ENCODE measurements at regions of chr13 and their contacts with region 1.

Region 1: DNA sequence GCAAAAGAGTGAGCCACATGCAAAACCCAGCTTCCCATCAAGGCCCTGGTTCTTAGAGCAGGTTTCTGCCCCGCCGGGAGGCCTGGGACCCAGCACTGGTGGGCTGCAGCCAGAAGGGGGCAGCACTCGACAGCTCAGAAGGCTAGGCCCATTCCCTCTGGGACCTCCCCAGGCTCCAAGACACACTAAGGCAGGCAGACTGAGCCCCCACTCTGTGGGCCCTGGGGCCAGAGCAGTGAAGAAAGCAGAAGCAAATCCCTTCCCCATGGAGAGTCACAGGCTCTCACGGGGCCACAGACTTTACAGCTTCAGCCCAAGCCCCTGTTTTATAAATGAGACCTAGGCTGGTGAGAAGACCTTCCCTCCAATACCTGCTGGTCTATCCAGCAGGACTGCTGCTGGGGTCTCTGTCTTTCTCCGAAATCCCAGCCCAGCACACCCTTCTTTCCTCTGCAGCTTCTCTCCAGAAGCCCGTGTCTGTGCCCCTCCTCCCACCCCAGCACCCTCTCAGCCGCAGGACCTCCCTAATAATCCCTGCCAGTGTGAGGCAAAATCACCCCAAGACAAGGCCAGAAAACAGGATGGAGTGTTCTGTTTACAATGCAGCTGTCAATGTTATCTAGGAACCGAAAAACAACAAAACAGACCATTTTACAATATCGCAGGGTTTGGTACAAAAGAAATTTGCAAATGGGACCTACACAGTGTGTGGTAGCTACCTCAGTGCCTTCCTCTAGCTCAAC is 109.3 kb downstream of the ABCC4 start:
- DNase-seq: peak; percentile 81 to 90
- H3K4me3 ChIP-seq: no peak overlapping the region
- H3K4me3 Mint-ChIP-seq: no peak overlapping the region
- H3K27ac Mint-ChIP-seq: no peak overlapping the region
- H3K4me1 ChIP-seq: no peaks in the 10 kb centered on the region
- H3K4me1 Mint-ChIP-seq: no peaks in the 10 kb centered on the region
- H3K27me3 ChIP-seq: no peaks in the 10 kb centered on the region
- H3K27me3 Mint-ChIP-seq: no peaks in the 10 kb centered on the region
- CTCF ChIP-seq: peak; percentile 96 to 99

Region 2: GRCh38 chr13:94967183-94968039 is 224.6 kb before region 1 on chr13:
- CTCF ChIA-PET with region 1: no interaction called
- POLR2A ChIA-PET with region 1: no interaction called
- intact Hi-C with region 1: no loop called
- DNase-seq: no peak
- H3K4me3 ChIP-seq: no peak overlapping the region
- H3K4me3 Mint-ChIP-seq: no peak overlapping the region
- H3K27ac Mint-ChIP-seq: no peak overlapping the region
- H3K4me1 ChIP-seq: no peaks in the 10 kb centered on the region
- H3K4me1 Mint-ChIP-seq: no peaks in the 10 kb centered on the region
- H3K27me3 ChIP-seq: no peaks in the 10 kb centered on the region; the same call in none of the 2 replicates
- H3K27me3 Mint-ChIP-seq: peaks cover 35% of the 10 kb centered on the region
- CTCF ChIP-seq: no peak

Region 3: GRCh38 chr13:95146486-95146885 is 45.5 kb before region 1 on chr13:
- CTCF ChIA-PET with region 1: no interaction called
- POLR2A ChIA-PET with region 1: no interaction called
- intact Hi-C with region 1: no loop called
- DNase-seq: no peak
- H3K4me3 ChIP-seq: no peak overlapping the region
- H3K4me3 Mint-ChIP-seq: no peak overlapping the region
- H3K27ac Mint-ChIP-seq: no peak overlapping the region
- H3K4me1 ChIP-seq: no peaks in the 10 kb centered on the region
- H3K4me1 Mint-ChIP-seq: peaks cover 14% of the 10 kb centered on the region
- H3K27me3 ChIP-seq: no peaks in the 10 kb centered on the region
- H3K27me3 Mint-ChIP-seq: no peaks in the 10 kb centered on the region
- CTCF ChIP-seq: no peak

Region 4: DNA sequence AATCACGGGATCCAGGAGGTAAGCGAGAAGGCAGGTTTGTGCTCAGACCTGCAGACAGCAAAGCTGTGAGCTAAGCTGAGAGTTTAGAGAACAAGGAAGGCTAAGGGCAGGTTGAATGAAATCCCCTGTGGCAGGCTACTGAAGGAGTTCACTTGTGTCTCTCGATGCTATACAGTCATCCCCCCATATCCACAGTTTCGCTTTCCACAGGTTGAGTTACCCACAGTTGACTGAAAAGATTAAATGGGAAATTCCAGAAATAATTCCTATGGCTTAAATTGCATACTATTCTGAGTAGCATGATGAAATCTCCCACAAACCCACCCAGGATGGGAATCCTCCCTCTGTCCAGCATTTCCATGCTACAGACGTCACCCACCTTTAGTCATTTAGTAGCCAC is 59.6 kb after region 1 on chr13:
- CTCF ChIA-PET with region 1: no interaction called
- POLR2A ChIA-PET with region 1: no interaction called
- intact Hi-C with region 1: loop called (anchors 5 kb)
- DNase-seq: no peak
- H3K4me3 ChIP-seq: no peak overlapping the region
- H3K4me3 Mint-ChIP-seq: no peak overlapping the region
- H3K27ac Mint-ChIP-seq: no peak overlapping the region
- H3K4me1 ChIP-seq: peaks cover 43% of the 10 kb centered on the region
- H3K4me1 Mint-ChIP-seq: peaks cover 29% of the 10 kb centered on the region
- H3K27me3 ChIP-seq: no peaks in the 10 kb centered on the region; the same call in 1 of the 2 replicates
- H3K27me3 Mint-ChIP-seq: no peaks in the 10 kb centered on the region
- CTCF ChIP-seq: no peak

Region 5: DNA sequence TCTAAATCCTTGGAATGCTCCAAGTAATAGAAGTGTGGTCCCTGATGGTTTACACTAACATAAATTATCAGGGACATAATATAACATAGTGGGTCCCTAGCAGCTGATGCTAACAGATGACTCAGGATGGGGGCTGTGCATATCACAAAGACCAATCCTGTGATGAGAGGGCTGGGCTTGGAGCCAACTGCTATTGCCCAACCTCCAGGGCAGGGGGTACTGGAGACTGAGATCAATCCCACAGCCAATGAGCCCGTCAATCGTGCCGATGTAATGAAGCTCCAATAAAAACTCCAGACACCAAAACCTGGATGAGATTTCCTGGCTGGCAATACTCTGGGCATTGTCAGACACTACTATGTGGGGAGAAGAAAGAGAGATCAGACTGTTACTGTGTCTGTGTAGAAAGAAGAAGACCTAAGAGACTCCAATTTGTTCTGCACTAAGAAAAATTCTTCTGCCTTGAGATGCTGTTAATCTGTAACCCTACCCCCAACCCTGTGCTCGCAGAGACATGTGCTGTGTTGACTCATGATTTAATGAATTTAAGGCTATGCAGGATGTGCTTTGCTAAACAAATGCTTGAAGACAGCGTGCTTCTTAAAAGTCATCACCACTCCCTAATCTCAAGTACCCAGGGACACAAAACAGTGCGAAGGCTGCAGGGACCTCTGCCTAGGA is 75.8 kb after region 1 on chr13:
- CTCF ChIA-PET with region 1: no interaction called
- POLR2A ChIA-PET with region 1: no interaction called
- intact Hi-C with region 1: loop called (anchors 5 kb)
- DNase-seq: peak; percentile 49 to 53
- H3K4me3 ChIP-seq: no peak overlapping the region
- H3K4me3 Mint-ChIP-seq: peak overlapping the region; percentile 51
- H3K27ac Mint-ChIP-seq: peak overlapping the region; percentile 69
- H3K4me1 ChIP-seq: peaks cover 42% of the 10 kb centered on the region
- H3K4me1 Mint-ChIP-seq: peaks cover 38% of the 10 kb centered on the region
- H3K27me3 ChIP-seq: no peaks in the 10 kb centered on the region
- H3K27me3 Mint-ChIP-seq: no peaks in the 10 kb centered on the region
- CTCF ChIP-seq: no peak

Region 6: GRCh38 chr13:95301183-95301967 is 109.4 kb after region 1 on chr13 and contains the start of gene ABCC4:
- CTCF ChIA-PET with region 1: interaction called, 15 read pairs
- POLR2A ChIA-PET with region 1: no interaction called
- intact Hi-C with region 1: loop called (anchors 1 kb)
- DNase-seq: peak; percentile 84 to 91
- H3K4me3 ChIP-seq: peak within 1 kb of the TSS; percentile 91
- H3K4me3 Mint-ChIP-seq: peak within 1 kb of the TSS; percentile 99
- H3K27ac Mint-ChIP-seq: peak within 1 kb of the TSS; percentile 88
- H3K4me1 ChIP-seq: peaks cover 46% of the 10 kb centered on the region
- H3K4me1 Mint-ChIP-seq: peaks cover 32% of the 10 kb centered on the region
- H3K27me3 ChIP-seq: no peaks in the 10 kb centered on the region
- H3K27me3 Mint-ChIP-seq: no peaks in the 10 kb centered on the region
- CTCF ChIP-seq: peak in 1 of 2 experiments; percentile 24
- total RNA-seq, gene ABCC4: 51.9 and 65.7 TPM in 2 replicates

Region 7: DNA sequence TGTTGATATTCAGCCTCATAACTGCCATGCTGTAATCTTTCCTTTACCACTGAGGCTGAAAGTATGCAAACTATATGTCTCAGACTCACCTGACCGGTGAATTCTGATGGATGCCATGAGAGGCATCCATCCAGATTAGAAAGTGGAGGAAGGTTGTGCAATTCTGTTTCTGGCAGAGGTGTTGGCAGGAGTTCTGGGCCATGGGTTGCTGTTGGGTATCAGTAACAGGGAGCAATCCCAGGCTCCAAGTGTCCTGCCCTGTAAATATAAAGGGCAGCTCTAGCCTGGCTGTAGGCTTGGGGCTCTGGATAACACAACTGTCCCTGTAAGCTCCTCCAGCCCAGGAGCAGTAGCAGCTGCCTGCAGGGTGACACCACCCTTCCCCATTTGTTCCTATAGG is 186.6 kb after region 1 on chr13:
- CTCF ChIA-PET with region 1: interaction called, 37 read pairs
- POLR2A ChIA-PET with region 1: no interaction called
- intact Hi-C with region 1: loop called (anchors 1 kb)
- DNase-seq: no peak
- H3K4me3 ChIP-seq: no peak overlapping the region
- H3K4me3 Mint-ChIP-seq: no peak overlapping the region
- H3K27ac Mint-ChIP-seq: no peak overlapping the region
- H3K4me1 ChIP-seq: no peaks in the 10 kb centered on the region
- H3K4me1 Mint-ChIP-seq: peaks cover 11% of the 10 kb centered on the region
- H3K27me3 ChIP-seq: no peaks in the 10 kb centered on the region
- H3K27me3 Mint-ChIP-seq: no peaks in the 10 kb centered on the region
- CTCF ChIP-seq: no peak

Region 8: DNA sequence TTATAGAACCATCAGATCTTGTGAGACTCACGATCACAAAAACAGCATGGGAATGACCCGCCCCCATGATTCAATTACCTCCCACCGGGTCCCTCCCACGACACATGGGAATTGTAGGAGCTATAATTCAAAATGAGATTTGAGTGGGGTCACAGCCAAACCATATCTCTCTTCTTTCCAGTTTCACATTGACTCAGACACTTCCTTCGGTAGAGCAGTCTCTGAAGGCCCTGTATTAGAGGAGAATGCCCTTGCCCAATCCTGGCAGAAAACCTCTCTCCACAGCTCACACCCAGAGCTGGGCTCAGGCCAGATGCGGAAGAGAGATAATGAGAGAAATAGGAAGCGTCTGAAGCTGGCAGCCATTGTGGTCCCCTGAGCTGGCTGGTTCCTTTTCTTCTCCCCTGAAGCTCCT is 288.1 kb after region 1 on chr13:
- CTCF ChIA-PET with region 1: interaction called, 3 read pairs
- POLR2A ChIA-PET with region 1: no interaction called
- intact Hi-C with region 1: loop called (anchors 1 kb)
- DNase-seq: no peak
- H3K4me3 ChIP-seq: no peak overlapping the region
- H3K4me3 Mint-ChIP-seq: no peak overlapping the region
- H3K27ac Mint-ChIP-seq: no peak overlapping the region
- H3K4me1 ChIP-seq: no peaks in the 10 kb centered on the region
- H3K4me1 Mint-ChIP-seq: no peaks in the 10 kb centered on the region
- H3K27me3 ChIP-seq: no peaks in the 10 kb centered on the region; the same call in 1 of the 2 replicates
- H3K27me3 Mint-ChIP-seq: peaks cover 10% of the 10 kb centered on the region
- CTCF ChIP-seq: no peak

Measured in Caco-2 (cell line).